Activated CD8-positive, alpha-beta memory T cell treated with anti-CD3 and anti-CD28 coated beads, Interleukin-2, amount 10 ng/mL, durations not matched to agents 7 days and 5 days (primary cell): ENCODE measurements at regions of chr10 and their contacts with region 1.

Region 1: DNA sequence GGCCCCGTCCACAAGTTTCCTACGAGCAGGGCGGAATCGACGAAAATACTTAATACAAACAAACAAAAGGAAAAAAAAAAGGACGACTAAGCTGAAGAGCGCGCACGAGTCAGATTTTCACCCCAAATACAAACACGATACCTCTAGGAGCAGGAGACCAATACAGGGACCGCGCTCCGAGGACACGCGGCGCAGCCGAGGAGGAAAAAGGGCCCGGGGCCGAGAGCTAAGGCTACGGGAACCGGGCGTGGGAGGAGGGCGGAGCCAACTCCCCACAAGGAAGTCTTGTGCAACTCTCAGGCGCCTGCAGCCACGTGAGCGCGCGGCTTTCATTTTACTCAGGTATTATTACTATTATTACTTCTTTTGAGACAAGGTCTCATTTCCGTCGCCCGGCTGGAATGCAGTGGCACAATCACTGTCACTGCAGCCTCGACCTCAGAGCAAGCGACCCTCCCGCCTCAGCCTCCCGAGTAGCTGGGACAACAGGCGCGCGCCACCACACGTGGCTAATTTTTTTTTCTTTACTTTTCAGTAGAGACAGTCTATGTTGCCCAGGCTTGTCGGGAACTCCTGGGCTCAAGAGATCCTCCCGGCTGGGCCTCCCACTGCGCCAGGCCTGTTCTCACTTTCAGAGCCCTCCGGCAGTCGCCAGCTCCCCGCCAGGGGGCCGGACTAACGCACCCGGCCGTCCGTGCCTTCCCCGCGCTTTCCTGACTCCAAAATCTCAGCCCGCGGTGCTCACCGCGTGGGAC is 1.2 kb downstream of the HNRNPF start:
- DNase-seq: peak; percentile 91
- ATAC-seq: peak; percentile 41
- H3K4me3 Mint-ChIP-seq: peak overlapping the region; percentile 98
- H3K27ac Mint-ChIP-seq: peak overlapping the region; percentile 98
- H3K4me1 Mint-ChIP-seq: peaks cover 31% of the 10 kb centered on the region
- H3K27me3 Mint-ChIP-seq: no peaks in the 10 kb centered on the region

Region 2: GRCh38 chr10:43390759-43391158 is 17.0 kb before region 1 on chr10:
- CTCF ChIA-PET with region 1: interaction called, 10 read pairs
- DNase-seq: no peak
- ATAC-seq: no peak
- H3K4me3 Mint-ChIP-seq: no peak overlapping the region
- H3K27ac Mint-ChIP-seq: peak overlapping the region; percentile 39
- H3K4me1 Mint-ChIP-seq: peaks cover 79% of the 10 kb centered on the region
- H3K27me3 Mint-ChIP-seq: no peaks in the 10 kb centered on the region

Region 3: DNA sequence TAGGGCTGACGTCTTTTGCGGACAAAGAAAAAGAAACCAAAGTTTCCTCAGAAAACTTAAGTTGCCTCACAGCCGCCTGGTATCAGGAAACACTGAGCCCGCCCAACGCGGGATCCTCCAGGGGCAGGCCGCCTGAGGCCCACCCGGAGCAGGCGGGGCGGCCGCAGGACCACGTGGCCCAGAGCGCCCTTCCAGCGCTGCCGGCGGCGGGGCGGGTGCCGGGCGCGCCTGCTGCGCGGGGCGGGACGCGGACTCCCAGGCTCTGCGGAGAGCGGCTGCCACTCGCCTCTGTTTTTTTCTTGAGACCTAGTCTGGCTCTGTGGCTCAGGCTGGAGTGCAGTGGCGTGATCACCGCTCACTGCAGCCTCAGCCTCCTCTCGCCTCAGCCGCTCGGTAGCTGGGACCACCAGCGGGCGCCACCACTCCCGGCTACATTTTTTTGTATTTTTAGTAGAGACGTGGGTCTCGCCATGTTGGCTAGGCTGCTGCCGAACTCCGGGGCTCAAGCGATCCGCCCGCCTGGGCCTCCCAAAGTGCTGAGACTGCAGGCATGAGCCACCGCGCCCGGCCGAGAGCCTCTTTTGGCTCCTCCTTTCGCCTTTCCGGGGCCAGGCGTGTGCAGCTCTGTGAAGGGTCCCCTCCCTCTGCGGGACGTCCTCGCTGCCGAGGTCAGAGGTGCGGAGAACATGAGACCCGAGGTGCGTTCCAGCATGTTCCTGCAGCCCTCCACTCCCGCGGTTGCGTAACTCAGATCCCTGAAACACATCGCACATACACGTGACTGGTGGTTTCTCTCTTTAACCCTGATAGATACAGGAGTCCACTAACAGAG is 12.8 kb after region 1 on chr10:
- CTCF ChIA-PET with region 1: interaction called, 19 read pairs
- DNase-seq: peak; percentile 93
- ATAC-seq: peak; percentile 89
- H3K4me3 Mint-ChIP-seq: peak overlapping the region; percentile 85
- H3K27ac Mint-ChIP-seq: peak overlapping the region; percentile 98
- H3K4me1 Mint-ChIP-seq: peaks cover 42% of the 10 kb centered on the region
- H3K27me3 Mint-ChIP-seq: no peaks in the 10 kb centered on the region